HCT116 (cell line): ENCODE measurements at regions of chr1 and their contacts with region 1.

Region 1: DNA sequence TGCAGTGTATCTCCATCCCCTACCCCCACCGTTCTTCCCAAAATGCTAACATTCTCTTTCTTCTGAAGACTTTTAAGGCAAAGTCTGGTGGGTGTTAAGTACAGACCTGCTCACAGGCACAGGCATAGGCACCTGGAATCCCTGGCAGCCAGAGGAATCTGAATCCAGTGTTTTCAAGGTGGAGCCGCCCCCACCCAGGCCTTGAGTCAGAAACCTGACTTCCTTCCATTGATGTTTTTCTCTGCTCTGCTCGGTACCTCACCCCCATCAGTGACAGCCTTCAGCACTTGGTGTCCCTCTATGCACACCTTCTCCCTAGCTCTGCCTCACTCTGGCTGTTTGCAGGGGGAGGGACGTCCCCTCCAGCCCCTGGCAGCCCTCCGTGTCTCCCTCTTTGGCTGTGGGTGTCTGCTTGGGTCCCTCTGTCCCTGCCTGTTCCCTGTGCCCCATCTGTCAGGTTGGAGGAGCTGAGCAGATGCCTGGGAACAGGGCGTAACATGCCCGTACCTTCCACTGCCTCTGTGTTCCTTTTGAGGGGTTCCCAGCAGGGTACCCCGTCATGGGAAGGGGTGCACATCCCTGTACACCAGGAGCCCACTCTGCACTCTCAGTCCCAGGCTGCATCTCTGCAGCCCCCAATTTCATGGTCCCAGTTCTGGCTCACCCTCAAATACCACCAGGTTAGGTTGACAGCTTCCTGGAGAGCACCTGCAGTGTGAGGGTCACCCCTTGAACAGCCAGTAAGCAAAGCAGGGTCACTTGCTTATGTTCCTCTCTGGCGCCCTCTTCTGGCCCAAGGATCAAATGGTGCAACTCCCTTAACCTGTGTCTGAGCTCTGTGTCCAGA is 6.7 kb downstream of the NCDN start:
- DNase-seq: peak; percentile 58
- ATAC-seq: peak; percentile 77
- H3K4me3 ChIP-seq: no peak overlapping the region
- H3K27ac ChIP-seq: no peak overlapping the region
- H3K4me1 ChIP-seq: no peaks in the 10 kb centered on the region
- H3K27me3 ChIP-seq: no peaks in the 10 kb centered on the region
- CTCF ChIP-seq: peak; percentile 59 to 81 (median 72)
- POLR2A ChIP-seq: no peak
- RAD21 ChIP-seq: peak; percentile 75

Region 2: GRCh38 chr1:35202048-35202719 is 362.1 kb before region 1 on chr1:
- CTCF ChIA-PET with region 1: interaction called, 7 read pairs
- POLR2A ChIA-PET with region 1: no interaction called
- RAD21 ChIA-PET with region 1: no interaction called
- intact Hi-C with region 1: loop called (anchors 2 kb)
- DNase-seq: peak; percentile 79
- ATAC-seq: peak; percentile 100
- H3K4me3 ChIP-seq: no peak overlapping the region; a peak in 1 of 4 replicates
- H3K27ac ChIP-seq: no peak overlapping the region
- H3K4me1 ChIP-seq: peaks cover 0 to 9% of the 10 kb centered on the region in 2 experiments; a peak in 2 of 4 replicates
- H3K27me3 ChIP-seq: no peaks in the 10 kb centered on the region
- CTCF ChIP-seq: peak; percentile 85 to 89 (median 88)
- POLR2A ChIP-seq: no peak
- RAD21 ChIP-seq: peak; percentile 77

Region 3: DNA sequence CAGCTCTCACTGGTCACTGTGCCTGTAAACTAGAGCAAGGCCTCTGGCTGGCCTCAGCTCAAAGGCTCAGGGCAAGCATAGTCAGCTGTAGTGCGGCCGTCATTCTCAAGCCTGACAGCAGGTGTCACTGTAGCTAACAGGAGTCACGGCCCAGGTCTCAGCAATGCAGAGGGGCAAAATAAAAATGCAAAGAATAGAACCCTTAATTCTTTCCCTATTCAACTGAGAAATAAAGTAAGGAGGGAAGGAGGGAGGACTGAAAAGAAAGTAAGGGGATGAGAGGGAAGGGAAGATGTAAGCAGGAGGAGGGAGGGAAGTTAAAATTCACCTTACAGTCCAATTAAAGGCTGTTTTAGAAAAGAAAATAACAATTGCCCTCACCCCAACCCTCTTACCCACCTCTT is 113.1 kb before region 1 on chr1:
- CTCF ChIA-PET with region 1: interaction called, 32 read pairs
- POLR2A ChIA-PET with region 1: no interaction called
- RAD21 ChIA-PET with region 1: interaction called, 8 to 14 read pairs
- intact Hi-C with region 1: loop called (anchors 1 kb)
- DNase-seq: peak; percentile 29
- ATAC-seq: peak; percentile 99
- H3K4me3 ChIP-seq: no peak overlapping the region
- H3K27ac ChIP-seq: no peak overlapping the region
- H3K4me1 ChIP-seq: no peaks in the 10 kb centered on the region
- H3K27me3 ChIP-seq: no peaks in the 10 kb centered on the region
- CTCF ChIP-seq: peak; percentile 79 to 87 (median 86)
- POLR2A ChIP-seq: no peak
- RAD21 ChIP-seq: peak; percentile 84

Region 4: GRCh38 chr1:35587736-35588135 is 23.5 kb after region 1 on chr1:
- CTCF ChIA-PET with region 1: no interaction called
- POLR2A ChIA-PET with region 1: no interaction called
- RAD21 ChIA-PET with region 1: no interaction called
- intact Hi-C with region 1: no loop called
- DNase-seq: no peak
- ATAC-seq: no peak
- H3K4me3 ChIP-seq: no peak overlapping the region
- H3K27ac ChIP-seq: no peak overlapping the region
- H3K4me1 ChIP-seq: no peaks in the 10 kb centered on the region
- H3K27me3 ChIP-seq: no peaks in the 10 kb centered on the region
- CTCF ChIP-seq: no peak
- POLR2A ChIP-seq: no peak
- RAD21 ChIP-seq: no peak

Region 5: GRCh38 chr1:35668506-35668905 is 104.2 kb after region 1 on chr1:
- CTCF ChIA-PET with region 1: no interaction called
- POLR2A ChIA-PET with region 1: no interaction called
- RAD21 ChIA-PET with region 1: no interaction called
- intact Hi-C with region 1: no loop called
- DNase-seq: no peak
- ATAC-seq: no peak
- H3K4me3 ChIP-seq: no peak overlapping the region
- H3K27ac ChIP-seq: no peak overlapping the region
- H3K4me1 ChIP-seq: no peaks in the 10 kb centered on the region
- H3K27me3 ChIP-seq: peaks cover 6% of the 10 kb centered on the region; the same call in 1 of the 2 replicates
- CTCF ChIP-seq: no peak
- POLR2A ChIP-seq: no peak
- RAD21 ChIP-seq: no peak

Region 6: GRCh38 chr1:35715568-35716002 is 151.3 kb after region 1 on chr1:
- CTCF ChIA-PET with region 1: interaction called, 34 read pairs
- POLR2A ChIA-PET with region 1: interaction called, 3 read pairs
- RAD21 ChIA-PET with region 1: interaction called, 4 to 5 read pairs
- intact Hi-C with region 1: no loop called
- DNase-seq: peak; percentile 72
- ATAC-seq: peak; percentile 69
- H3K4me3 ChIP-seq: no peak overlapping the region
- H3K27ac ChIP-seq: no peak overlapping the region; the same call in 1 of the 2 replicates
- H3K4me1 ChIP-seq: peaks cover 11 to 25% of the 10 kb centered on the region in 2 experiments
- H3K27me3 ChIP-seq: no peaks in the 10 kb centered on the region
- CTCF ChIP-seq: peak; percentile 71 to 93 (median 89)
- POLR2A ChIP-seq: no peak
- RAD21 ChIP-seq: peak; percentile 84